ENCODE measurements at regions of chr14 and their contacts with region 1.

Region 1: DNA sequence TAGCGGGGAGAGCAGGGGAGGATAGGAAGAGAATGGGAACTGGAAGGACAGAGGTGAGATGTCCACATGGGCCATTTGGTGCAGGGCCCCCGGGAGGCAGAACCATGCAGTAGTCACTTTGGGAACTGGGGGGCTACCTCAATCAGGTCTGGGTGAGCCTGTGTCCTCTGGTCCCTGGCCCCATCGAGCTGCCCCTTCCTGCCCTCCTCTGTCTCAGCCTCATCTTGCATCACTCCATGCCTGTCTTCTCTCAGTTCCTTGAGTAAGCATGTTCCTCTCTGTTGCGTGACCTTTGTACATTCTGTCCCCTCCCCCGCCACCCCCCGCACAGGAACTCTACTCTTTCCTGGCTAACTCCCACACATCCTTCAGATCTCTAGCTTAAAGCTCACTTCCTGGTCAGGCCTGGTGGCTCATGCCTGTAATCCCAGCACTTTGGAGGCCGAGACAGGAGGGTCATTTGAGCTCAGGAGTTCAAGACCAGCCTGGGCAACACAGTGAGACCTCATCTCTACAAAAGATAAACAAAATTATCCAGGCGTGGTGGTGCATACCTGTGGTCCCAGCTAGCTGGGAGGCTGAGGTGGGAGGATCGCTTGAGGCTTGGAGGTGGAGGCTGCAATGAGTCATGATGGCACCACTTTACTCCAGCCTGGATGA is 23.2 kb downstream of the FOS start:
- DNase-seq: peak; percentile 71
- H3K4me3 Mint-ChIP-seq: no peak overlapping the region
- H3K27ac Mint-ChIP-seq: peak overlapping the region; percentile 76
- H3K4me1 Mint-ChIP-seq: peaks cover 23% of the 10 kb centered on the region
- H3K27me3 Mint-ChIP-seq: no peaks in the 10 kb centered on the region

Region 2: DNA sequence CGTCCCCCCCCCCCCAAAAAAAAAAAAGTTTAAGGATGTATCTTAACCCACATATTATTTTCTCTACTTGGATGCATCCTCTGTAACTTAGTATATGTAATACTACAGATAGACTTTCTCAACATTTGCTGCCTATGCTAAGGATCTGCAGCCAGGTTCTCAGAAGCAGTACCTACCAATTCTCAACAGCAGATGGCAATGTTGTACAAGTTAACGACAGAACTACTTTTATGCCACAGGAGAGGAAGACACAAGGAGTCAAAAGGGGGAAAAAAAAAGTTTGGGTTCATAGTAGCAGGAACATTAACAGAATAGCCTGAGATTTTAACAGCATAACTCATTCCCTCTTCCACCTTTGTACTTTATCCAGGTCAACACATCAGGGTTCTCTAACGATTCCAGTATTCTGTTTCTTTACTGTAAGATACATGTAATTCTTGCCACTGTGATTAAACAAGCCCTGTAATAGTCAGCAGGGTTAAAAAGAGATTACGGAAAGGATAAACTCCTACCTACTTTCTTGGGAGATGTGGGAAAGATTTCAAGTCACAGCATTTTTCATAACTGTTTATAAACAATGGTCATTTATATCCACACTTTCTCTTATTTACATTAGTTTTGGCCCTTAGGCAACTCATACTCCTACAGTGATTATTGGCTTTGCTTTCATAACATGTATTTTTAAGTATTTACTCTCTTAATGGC is 169.3 kb before region 1 on chr14:
- CTCF ChIA-PET with region 1: interaction called, 280 read pairs
- POLR2A ChIA-PET with region 1: no interaction called
- intact Hi-C with region 1: loop called (anchors 1 kb)
- DNase-seq: peak; percentile 37
- H3K4me3 Mint-ChIP-seq: no peak overlapping the region
- H3K27ac Mint-ChIP-seq: peak overlapping the region; percentile 50
- H3K4me1 Mint-ChIP-seq: peaks cover 18% of the 10 kb centered on the region
- H3K27me3 Mint-ChIP-seq: no peaks in the 10 kb centered on the region

Region 3: DNA sequence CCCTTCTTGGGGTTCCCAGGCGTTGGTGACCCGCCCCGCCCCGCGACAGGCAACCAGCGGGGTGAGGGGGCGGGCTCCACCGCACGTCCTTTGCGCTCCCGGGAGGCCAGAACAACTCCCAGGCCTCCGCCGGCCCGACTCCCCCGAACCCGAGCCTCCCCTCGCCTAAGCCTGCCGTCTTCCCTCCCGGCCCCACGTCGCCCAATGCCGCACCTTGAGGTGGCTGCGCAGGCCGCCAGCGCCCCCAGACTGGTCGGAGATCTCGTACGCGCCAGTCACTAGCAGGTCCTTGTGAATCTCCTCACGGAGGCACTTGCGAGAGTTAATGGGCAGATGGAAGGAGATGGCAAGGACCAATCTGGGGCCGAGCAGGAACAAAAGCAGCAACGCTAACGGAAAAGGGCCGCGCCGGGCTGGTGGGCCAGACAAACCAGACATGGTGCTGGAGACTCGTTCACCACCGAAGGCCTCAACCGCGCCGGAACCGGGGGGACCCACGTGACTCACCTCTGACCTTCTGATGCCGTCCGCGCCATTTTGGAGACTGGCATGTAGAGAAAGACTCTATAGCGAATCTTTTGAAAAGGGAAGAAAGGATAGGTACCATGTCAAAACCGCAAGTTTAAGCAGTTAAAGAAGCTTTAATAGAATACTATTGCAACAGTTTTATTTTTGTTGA is 125.5 kb before region 1 on chr14 and contains the start of gene TMED10:
- CTCF ChIA-PET with region 1: no interaction called
- POLR2A ChIA-PET with region 1: no interaction called
- intact Hi-C with region 1: no loop called
- DNase-seq: peak; percentile 94
- H3K4me3 Mint-ChIP-seq: peak within 1 kb of the TSS; percentile 86
- H3K27ac Mint-ChIP-seq: peak within 1 kb of the TSS; percentile 98
- H3K4me1 Mint-ChIP-seq: peaks cover 42% of the 10 kb centered on the region
- H3K27me3 Mint-ChIP-seq: no peaks in the 10 kb centered on the region
- total RNA-seq, gene TMED10: 189 to 201 TPM

Region 4: GRCh38 chr14:75315144-75315543 is 13.3 kb after region 1 on chr14:
- CTCF ChIA-PET with region 1: no interaction called
- POLR2A ChIA-PET with region 1: no interaction called
- intact Hi-C with region 1: no loop called
- DNase-seq: no peak
- H3K4me3 Mint-ChIP-seq: no peak overlapping the region
- H3K27ac Mint-ChIP-seq: no peak overlapping the region
- H3K4me1 Mint-ChIP-seq: peaks cover 3% of the 10 kb centered on the region
- H3K27me3 Mint-ChIP-seq: peaks cover 6% of the 10 kb centered on the region